ENCODE measurements at regions of chr2 and their contacts with region 1.

Region 1: GRCh38 chr2:221517696-221518151 is 54.4 kb downstream of the EPHA4 start:
- DNase-seq: peak; percentile 84 to 93 (median 86)
- H3K4me3 ChIP-seq: peak overlapping the region in 1 of 2 donors; percentile 31
- H3K4me3 Mint-ChIP-seq: no peak overlapping the region
- H3K27ac ChIP-seq: peak overlapping the region; percentile 80
- H3K27ac Mint-ChIP-seq: no peak overlapping the region
- H3K4me1 ChIP-seq: peaks cover 66% of the 10 kb centered on the region
- H3K4me1 Mint-ChIP-seq: peaks cover 9 to 43% (median 30%) of the 10 kb centered on the region in 4 donors
- H3K27me3 ChIP-seq: no peaks in the 10 kb centered on the region
- H3K27me3 Mint-ChIP-seq: peaks cover 0 to 1% of the 10 kb centered on the region in 2 donors

Region 2: DNA sequence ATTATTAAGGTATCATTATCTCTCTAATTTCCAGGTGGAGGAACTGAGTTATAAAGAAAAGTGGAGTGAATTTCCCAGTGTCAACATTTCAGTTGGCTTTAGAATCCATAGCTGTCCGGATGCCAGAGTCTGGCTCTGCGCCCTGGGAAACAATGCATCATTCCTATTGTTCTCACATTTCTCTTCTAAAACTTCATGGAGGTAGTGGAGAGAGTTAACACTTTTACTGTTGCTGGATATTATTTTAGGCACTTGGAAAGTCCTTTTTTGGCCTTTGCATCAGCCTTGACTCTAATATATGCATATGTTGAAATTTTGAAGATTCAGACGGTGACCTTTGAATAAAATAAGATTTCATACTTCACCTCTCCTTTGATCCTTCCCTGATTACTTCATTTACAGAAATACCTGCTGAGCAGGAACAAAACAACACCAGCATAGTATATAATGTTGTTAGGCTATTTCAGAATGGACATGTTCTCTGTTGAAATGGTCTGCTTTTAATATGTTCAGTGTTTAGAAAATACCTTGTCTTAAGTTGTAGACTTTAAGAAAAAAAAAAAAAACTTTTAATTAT is 94.4 kb before region 1 on chr2:
- CTCF ChIA-PET with region 1: no interaction called
- POLR2A ChIA-PET with region 1: interaction called, 11 read pairs
- intact Hi-C with region 1: loop called (anchors 5 kb)
- DNase-seq: no peak
- H3K4me3 ChIP-seq: no peak overlapping the region
- H3K4me3 Mint-ChIP-seq: no peak overlapping the region
- H3K27ac ChIP-seq: no peak overlapping the region
- H3K27ac Mint-ChIP-seq: peak overlapping the region in 2 of 7 donors; percentile 70 to 79
- H3K4me1 ChIP-seq: peaks cover 29% of the 10 kb centered on the region
- H3K4me1 Mint-ChIP-seq: peaks cover 21 to 50% (median 37%) of the 10 kb centered on the region in 4 donors
- H3K27me3 ChIP-seq: no peaks in the 10 kb centered on the region
- H3K27me3 Mint-ChIP-seq: no peaks in the 10 kb centered on the region

Region 3: GRCh38 chr2:221482666-221483455 is 34.9 kb before region 1 on chr2:
- CTCF ChIA-PET with region 1: no interaction called
- POLR2A ChIA-PET with region 1: interaction called, 10 read pairs
- intact Hi-C with region 1: no loop called
- DNase-seq: no peak
- H3K4me3 ChIP-seq: no peak overlapping the region
- H3K4me3 Mint-ChIP-seq: no peak overlapping the region
- H3K27ac ChIP-seq: no peak overlapping the region
- H3K27ac Mint-ChIP-seq: peak overlapping the region in 1 of 7 donors; percentile 51
- H3K4me1 ChIP-seq: no peaks in the 10 kb centered on the region
- H3K4me1 Mint-ChIP-seq: peaks cover 8 to 10% (median 9%) of the 10 kb centered on the region in 4 donors
- H3K27me3 ChIP-seq: no peaks in the 10 kb centered on the region
- H3K27me3 Mint-ChIP-seq: no peaks in the 10 kb centered on the region

Region 4: GRCh38 chr2:221502270-221503010 is 15.3 kb before region 1 on chr2:
- CTCF ChIA-PET with region 1: interaction called, 23 read pairs
- POLR2A ChIA-PET with region 1: interaction called, 35 read pairs
- intact Hi-C with region 1: loop called (anchors 2 kb)
- DNase-seq: no peak
- H3K4me3 ChIP-seq: no peak overlapping the region
- H3K4me3 Mint-ChIP-seq: peak overlapping the region in 1 of 8 donors; percentile 37
- H3K27ac ChIP-seq: no peak overlapping the region
- H3K27ac Mint-ChIP-seq: peak overlapping the region in 5 of 7 donors; percentile 1 to 39 (median 13)
- H3K4me1 ChIP-seq: peaks cover 22% of the 10 kb centered on the region
- H3K4me1 Mint-ChIP-seq: peaks cover 28 to 59% (median 45%) of the 10 kb centered on the region in 4 donors
- H3K27me3 ChIP-seq: no peaks in the 10 kb centered on the region
- H3K27me3 Mint-ChIP-seq: no peaks in the 10 kb centered on the region

Region 5: GRCh38 chr2:221535824-221536223 is 18.1 kb after region 1 on chr2:
- CTCF ChIA-PET with region 1: interaction called, 26 read pairs
- POLR2A ChIA-PET with region 1: interaction called, 186 read pairs
- intact Hi-C with region 1: no loop called
- DNase-seq: no peak
- H3K4me3 ChIP-seq: no peak overlapping the region
- H3K4me3 Mint-ChIP-seq: peak overlapping the region in 1 of 8 donors; percentile 31
- H3K27ac ChIP-seq: no peak overlapping the region
- H3K27ac Mint-ChIP-seq: peak overlapping the region in 5 of 7 donors; percentile 9 to 77 (median 52)
- H3K4me1 ChIP-seq: peaks cover 21% of the 10 kb centered on the region
- H3K4me1 Mint-ChIP-seq: peaks cover 39 to 60% (median 52%) of the 10 kb centered on the region in 4 donors
- H3K27me3 ChIP-seq: no peaks in the 10 kb centered on the region
- H3K27me3 Mint-ChIP-seq: no peaks in the 10 kb centered on the region

Region 6: DNA sequence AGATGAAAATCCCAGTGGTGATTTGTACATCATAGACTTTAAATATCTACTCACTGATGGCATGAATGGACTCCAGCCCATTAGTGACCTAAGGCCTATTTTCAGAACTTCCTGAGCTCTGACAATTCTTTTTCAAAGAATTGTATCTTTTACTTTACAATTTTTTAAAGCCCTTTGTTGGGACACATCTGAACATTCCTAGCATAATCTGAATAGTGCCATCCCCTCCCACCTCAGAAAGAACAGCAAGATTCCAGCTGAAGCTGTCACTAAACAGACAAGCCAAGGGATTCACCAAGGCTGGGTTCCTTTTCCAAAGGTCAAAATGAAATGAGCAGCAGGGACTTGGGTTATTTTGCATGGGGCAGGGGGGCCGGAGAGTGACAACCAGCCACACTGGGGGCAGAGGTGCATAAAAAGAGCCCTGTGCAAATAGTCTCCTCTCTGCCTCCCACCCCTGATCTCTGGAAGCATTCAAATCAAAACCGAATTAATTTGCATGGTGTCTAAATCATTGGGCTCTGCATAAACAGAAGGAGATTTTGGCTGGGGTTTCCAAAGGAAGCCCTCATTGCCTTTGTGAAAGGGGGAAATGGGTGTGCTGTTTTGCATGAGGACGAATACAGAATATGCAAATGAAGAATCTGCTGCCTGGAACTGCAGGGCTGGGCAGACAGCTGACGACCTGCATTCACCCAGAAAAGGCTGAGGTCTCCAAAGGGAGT is 37.2 kb after region 1 on chr2:
- CTCF ChIA-PET with region 1: interaction called, 4 read pairs
- POLR2A ChIA-PET with region 1: interaction called, 28 read pairs
- intact Hi-C with region 1: no loop called
- DNase-seq: peak in 1 of 5 donors; percentile 15
- H3K4me3 ChIP-seq: no peak overlapping the region
- H3K4me3 Mint-ChIP-seq: peak overlapping the region in 7 of 8 donors; percentile 71 to 85 (median 80)
- H3K27ac ChIP-seq: no peak overlapping the region
- H3K27ac Mint-ChIP-seq: peak overlapping the region; percentile 63 to 88 (median 77)
- H3K4me1 ChIP-seq: peaks cover 39% of the 10 kb centered on the region
- H3K4me1 Mint-ChIP-seq: peaks cover 53 to 77% (median 64%) of the 10 kb centered on the region in 4 donors
- H3K27me3 ChIP-seq: no peaks in the 10 kb centered on the region
- H3K27me3 Mint-ChIP-seq: no peaks in the 10 kb centered on the region

Region 7: GRCh38 chr2:221573430-221574230 is 55.9 kb after region 1 on chr2:
- CTCF ChIA-PET with region 1: interaction called, 15 read pairs
- POLR2A ChIA-PET with region 1: interaction called, 160 read pairs
- intact Hi-C with region 1: loop called (anchors 1 kb)
- DNase-seq: peak; percentile 73 to 84 (median 74)
- H3K4me3 ChIP-seq: peak overlapping the region; percentile 69 to 90
- H3K4me3 Mint-ChIP-seq: peak overlapping the region; percentile 77 to 93 (median 86)
- H3K27ac ChIP-seq: peak overlapping the region; percentile 79
- H3K27ac Mint-ChIP-seq: peak overlapping the region in 6 of 7 donors; percentile 24 to 93 (median 74)
- H3K4me1 ChIP-seq: peaks cover 32% of the 10 kb centered on the region
- H3K4me1 Mint-ChIP-seq: peaks cover 23 to 40% (median 31%) of the 10 kb centered on the region in 4 donors
- H3K27me3 ChIP-seq: peaks cover 6% of the 10 kb centered on the region
- H3K27me3 Mint-ChIP-seq: peaks cover 24 to 31% of the 10 kb centered on the region in 2 donors

Measured in CD4-positive, alpha-beta memory T cell (primary cell).